Body of pancreas (tissue), 4 donors: ENCODE measurements at regions of chr18 and their contacts with region 1.

Region 1: GRCh38 chr18:3151399-3152264 is 68.1 kb downstream of the MYOM1 start:
- DNase-seq: no peak
- ATAC-seq: no peak
- H3K4me3 ChIP-seq: no peak overlapping the region
- H3K27ac ChIP-seq: no peak overlapping the region
- H3K4me1 ChIP-seq: peaks cover 9% of the 10 kb centered on the region
- H3K27me3 ChIP-seq: no peaks in the 10 kb centered on the region
- CTCF ChIP-seq: peak; percentile 58 to 77 (median 66)
- POLR2A ChIP-seq: no peak

Region 2: GRCh38 chr18:2547477-2548087 is 604.0 kb before region 1 on chr18:
- intact Hi-C with region 1: no loop called
- DNase-seq: no peak
- ATAC-seq: peak; percentile 47
- H3K4me3 ChIP-seq: no peak overlapping the region
- H3K27ac ChIP-seq: no peak overlapping the region
- H3K4me1 ChIP-seq: no peaks in the 10 kb centered on the region
- H3K27me3 ChIP-seq: no peaks in the 10 kb centered on the region
- CTCF ChIP-seq: peak; percentile 22 to 68 (median 56)
- POLR2A ChIP-seq: no peak

Region 3: GRCh38 chr18:2917259-2918047 is 234.2 kb before region 1 on chr18:
- intact Hi-C with region 1: loop called (anchors 10 kb)
- DNase-seq: no peak
- ATAC-seq: no peak
- H3K4me3 ChIP-seq: no peak overlapping the region
- H3K27ac ChIP-seq: peak overlapping the region in 1 of 4 donors; percentile 28
- H3K4me1 ChIP-seq: peaks cover 10% of the 10 kb centered on the region
- H3K27me3 ChIP-seq: no peaks in the 10 kb centered on the region
- CTCF ChIP-seq: no peak
- POLR2A ChIP-seq: no peak

Region 4: GRCh38 chr18:3245853-3246634 is 94.4 kb after region 1 on chr18:
- intact Hi-C with region 1: loop called (anchors 10 kb)
- DNase-seq: peak; percentile 91 to 94 (median 92)
- ATAC-seq: peak; percentile 71
- H3K4me3 ChIP-seq: peak overlapping the region; percentile 12 to 13
- H3K27ac ChIP-seq: peak overlapping the region; percentile 98 to 99 (median 99)
- H3K4me1 ChIP-seq: peaks cover 38% of the 10 kb centered on the region
- H3K27me3 ChIP-seq: no peaks in the 10 kb centered on the region
- CTCF ChIP-seq: peak; percentile 92 to 99 (median 97)
- POLR2A ChIP-seq: peak in 1 of 3 donors; percentile 22